Activated CD4-positive, alpha-beta memory T cell treated with anti-CD3 and anti-CD28 coated beads, Interleukin-2, amount 10 ng/mL, durations not matched to agents 7 days and 5 days (primary cell): ENCODE measurements at regions of chr2 and their contacts with region 1.

Region 1: GRCh38 chr2:101252408-101253012 is at the start of gene CNOT11:
- DNase-seq: peak; percentile 99
- H3K4me3 Mint-ChIP-seq: peak within 1 kb of the TSS; percentile 96
- H3K27ac Mint-ChIP-seq: peak within 1 kb of the TSS; percentile 93
- H3K4me1 Mint-ChIP-seq: peaks cover 52% of the 10 kb centered on the region
- H3K27me3 Mint-ChIP-seq: no peaks in the 10 kb centered on the region
- total RNA-seq, gene CNOT11: 60.3 to 65.9 TPM

Region 2: DNA sequence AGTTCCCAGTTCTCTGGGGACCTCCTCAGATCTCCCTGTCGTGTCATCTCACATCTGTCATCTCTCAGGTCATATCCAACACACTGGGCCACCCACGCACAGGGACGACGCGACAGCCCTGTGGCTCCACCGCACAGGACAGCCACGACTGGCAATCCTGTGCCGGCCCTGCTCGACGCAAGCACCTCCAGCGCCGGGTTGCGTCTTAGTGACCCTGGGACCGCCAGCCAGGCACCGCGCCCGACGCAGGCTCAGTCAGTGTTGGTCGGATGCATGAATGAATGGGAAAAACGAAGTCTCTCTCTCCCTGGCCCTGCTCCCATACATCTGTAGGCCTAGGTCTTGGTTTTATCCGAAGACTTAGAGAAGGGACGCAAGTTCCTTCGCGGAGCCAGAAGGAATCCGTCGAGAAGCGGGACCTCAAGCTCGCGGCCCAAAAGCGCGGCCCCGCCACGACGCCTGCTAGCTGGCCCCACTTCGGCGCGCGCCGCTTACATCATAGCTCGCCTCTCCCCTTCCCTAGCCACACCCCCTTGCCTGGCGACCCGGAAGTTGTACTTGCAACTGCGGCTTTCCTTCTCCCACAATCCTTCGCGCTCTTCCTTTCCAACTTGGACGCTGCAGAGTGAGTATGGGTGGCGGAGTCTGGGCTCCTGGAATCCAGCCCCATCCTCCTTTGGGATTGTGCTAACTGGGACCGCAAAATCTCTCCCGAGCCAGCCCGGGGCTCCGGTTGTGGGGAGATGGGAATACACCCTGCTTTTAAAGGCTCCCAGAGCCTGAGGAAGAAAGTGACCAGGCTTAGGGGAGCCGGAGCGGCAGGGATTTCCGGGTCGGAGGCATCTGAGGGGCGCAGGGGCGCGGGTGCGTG is 250.6 kb before region 1 on chr2 and contains the start of gene RPL31:
- CTCF ChIA-PET with region 1: no interaction called
- POLR2A ChIA-PET with region 1: interaction called, 24 read pairs
- DNase-seq: peak; percentile 97
- H3K4me3 Mint-ChIP-seq: peak within 1 kb of the TSS; percentile 100
- H3K27ac Mint-ChIP-seq: peak within 1 kb of the TSS; percentile 87
- H3K4me1 Mint-ChIP-seq: peaks cover 49% of the 10 kb centered on the region
- H3K27me3 Mint-ChIP-seq: peaks cover 3% of the 10 kb centered on the region
- total RNA-seq, gene RPL31: 1,356 to 1,364 TPM

Region 3: GRCh38 chr2:101173707-101174295 is 78.7 kb before region 1 on chr2:
- CTCF ChIA-PET with region 1: no interaction called
- POLR2A ChIA-PET with region 1: no interaction called
- DNase-seq: no peak
- H3K4me3 Mint-ChIP-seq: no peak overlapping the region
- H3K27ac Mint-ChIP-seq: no peak overlapping the region
- H3K4me1 Mint-ChIP-seq: peaks cover 5% of the 10 kb centered on the region
- H3K27me3 Mint-ChIP-seq: no peaks in the 10 kb centered on the region

Region 4: DNA sequence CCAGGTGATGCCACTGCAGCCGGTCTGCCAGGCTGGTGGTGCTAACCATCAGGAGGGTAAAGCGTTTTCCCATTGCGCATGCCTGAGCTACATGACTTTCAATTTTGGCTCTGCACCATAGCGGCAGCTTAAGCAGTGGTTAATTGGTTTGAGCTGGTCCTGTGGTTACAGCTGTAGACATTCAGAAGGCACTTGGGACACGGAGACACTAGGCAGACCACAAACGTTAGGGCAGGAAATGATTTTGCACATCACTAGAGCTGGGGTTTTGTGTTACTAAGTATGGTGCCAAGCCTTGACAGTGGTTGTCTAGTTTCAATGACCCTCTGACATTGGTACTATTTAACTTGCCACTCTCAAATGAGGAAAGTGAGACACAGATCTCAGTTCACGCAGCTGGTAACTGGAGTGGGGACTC is 28.7 kb before region 1 on chr2:
- CTCF ChIA-PET with region 1: interaction called, 5 read pairs
- POLR2A ChIA-PET with region 1: interaction called, 17 read pairs
- DNase-seq: peak; percentile 72
- H3K4me3 Mint-ChIP-seq: no peak overlapping the region
- H3K27ac Mint-ChIP-seq: peak overlapping the region; percentile 66
- H3K4me1 Mint-ChIP-seq: peaks cover 22% of the 10 kb centered on the region
- H3K27me3 Mint-ChIP-seq: no peaks in the 10 kb centered on the region

Region 5: DNA sequence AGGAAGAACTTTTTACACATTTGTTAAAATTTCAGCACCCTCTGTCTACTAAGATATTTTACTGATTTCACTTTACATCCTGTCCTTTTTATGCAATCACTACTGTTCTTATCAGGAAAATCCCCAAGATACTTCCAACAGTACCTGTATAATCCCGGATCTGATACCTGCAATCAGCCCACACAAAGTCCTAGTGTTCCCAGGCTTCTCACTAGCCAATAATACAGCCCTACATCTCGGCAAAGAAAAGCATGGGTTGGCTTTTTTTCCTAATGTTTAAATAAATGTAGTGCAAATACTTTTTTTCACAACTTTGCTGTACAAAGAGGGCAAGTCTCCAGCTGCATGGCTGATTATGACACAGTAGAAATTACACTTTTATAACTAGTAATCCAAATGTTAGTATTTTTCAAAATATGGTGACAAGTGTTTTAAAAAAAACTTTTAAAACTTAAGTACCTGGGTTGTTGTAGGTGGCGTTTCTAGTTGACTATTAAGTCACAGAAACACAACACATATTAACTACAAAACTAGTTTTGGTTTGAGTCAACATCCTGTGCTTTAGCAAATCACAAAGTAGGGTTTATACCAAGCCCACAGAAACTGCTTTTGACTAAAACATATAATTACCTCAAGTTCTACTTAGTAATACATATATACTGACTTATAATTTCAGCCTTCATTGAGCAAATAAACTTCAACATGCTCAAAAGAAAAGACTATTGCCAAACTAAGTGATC is 19.7 kb after region 1 on chr2:
- CTCF ChIA-PET with region 1: interaction called, 3 read pairs
- POLR2A ChIA-PET with region 1: interaction called, 42 read pairs
- DNase-seq: no peak
- H3K4me3 Mint-ChIP-seq: peak overlapping the region; percentile 21
- H3K27ac Mint-ChIP-seq: peak overlapping the region; percentile 85
- H3K4me1 Mint-ChIP-seq: peaks cover 57% of the 10 kb centered on the region
- H3K27me3 Mint-ChIP-seq: no peaks in the 10 kb centered on the region

Region 6: DNA sequence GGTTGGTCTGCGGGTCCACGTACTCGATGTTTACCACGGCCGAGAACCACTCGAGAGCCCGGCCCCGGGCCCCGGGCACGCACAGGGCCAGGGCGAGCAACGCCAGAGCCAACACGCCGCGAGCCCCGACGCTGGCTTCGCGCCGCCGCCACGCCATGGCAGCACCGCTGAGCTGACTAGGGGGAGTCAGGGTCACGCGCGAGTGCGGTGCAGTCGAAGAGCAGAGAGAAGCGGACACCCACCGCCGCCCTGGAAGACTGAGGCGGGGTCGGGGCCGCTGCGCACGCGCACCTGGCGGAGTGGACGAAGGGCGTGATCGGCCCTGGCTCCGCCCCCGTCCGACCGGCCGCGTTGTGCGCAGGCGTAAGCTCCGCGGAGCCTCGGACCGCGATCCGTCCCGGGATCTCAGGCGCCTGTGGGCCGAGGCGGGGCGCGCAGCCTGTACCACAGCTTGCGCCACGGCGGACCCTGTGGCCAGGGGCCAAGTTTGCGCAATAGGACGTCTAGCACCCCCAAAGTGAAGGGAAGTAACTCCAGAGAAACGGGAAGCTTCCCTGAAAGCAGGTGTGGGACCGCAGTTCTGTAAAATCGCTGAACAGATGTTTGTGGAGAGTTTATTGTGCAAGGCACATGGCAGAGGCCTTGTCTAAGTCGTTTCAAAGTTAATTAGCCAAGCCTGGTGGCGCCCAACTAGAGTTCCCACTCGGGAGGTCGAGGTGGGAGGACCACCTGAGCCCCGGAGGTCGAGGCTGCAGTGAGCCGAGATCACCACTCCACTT is 56.1 kb after region 1 on chr2 and contains the start of gene RNF149:
- CTCF ChIA-PET with region 1: interaction called, 13 read pairs
- POLR2A ChIA-PET with region 1: interaction called, 50 read pairs
- DNase-seq: peak; percentile 93
- H3K4me3 Mint-ChIP-seq: peak within 1 kb of the TSS; percentile 100
- H3K27ac Mint-ChIP-seq: peak within 1 kb of the TSS; percentile 97
- H3K4me1 Mint-ChIP-seq: peaks cover 69% of the 10 kb centered on the region
- H3K27me3 Mint-ChIP-seq: no peaks in the 10 kb centered on the region
- total RNA-seq, gene RNF149: 115 to 116 TPM

Region 7: GRCh38 chr2:101341901-101342624 is 89.6 kb after region 1 on chr2:
- CTCF ChIA-PET with region 1: interaction called, 4 read pairs
- POLR2A ChIA-PET with region 1: interaction called, 12 read pairs
- DNase-seq: peak; percentile 80
- H3K4me3 Mint-ChIP-seq: no peak overlapping the region
- H3K27ac Mint-ChIP-seq: peak overlapping the region; percentile 32
- H3K4me1 Mint-ChIP-seq: peaks cover 42% of the 10 kb centered on the region
- H3K27me3 Mint-ChIP-seq: peaks cover 7% of the 10 kb centered on the region

Region 8: DNA sequence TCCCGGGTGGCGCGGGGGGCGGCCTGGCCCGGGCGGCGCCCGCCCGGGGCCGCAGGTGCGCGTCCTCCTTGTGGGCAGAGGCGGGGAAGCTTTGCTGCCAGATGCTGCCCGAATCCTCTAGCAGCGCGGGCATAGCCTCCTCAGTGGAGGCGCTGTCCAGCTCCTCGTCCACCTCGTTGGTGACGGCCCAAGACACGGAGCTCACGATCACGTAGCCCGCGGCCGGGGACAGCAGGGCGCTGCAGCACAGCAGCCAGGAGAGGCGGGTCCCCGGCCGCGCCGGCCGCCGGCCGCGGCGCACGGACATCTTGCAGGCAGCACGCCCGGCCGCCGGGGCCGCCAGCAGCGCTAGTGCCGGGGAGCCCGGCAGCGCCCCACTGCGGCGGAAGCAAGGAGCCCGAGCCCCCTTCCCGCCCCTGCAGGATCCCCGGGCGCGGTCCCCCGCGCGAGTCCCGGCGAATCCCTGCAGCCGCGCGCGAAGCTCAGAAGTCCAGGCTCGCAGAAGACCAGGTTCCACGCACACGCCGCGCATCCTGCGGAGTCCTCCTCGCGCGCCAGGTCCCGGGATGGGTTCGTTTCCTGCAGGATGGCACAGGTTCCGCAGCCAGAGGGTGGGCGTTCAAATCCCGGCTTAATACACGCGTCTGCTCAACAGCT is 134.8 kb after region 1 on chr2 and contains the start of gene CREG2:
- CTCF ChIA-PET with region 1: interaction called, 3 read pairs
- POLR2A ChIA-PET with region 1: interaction called, 13 read pairs
- DNase-seq: peak; percentile 69
- H3K4me3 Mint-ChIP-seq: peak within 1 kb of the TSS; percentile 60
- H3K27ac Mint-ChIP-seq: no peak within 1 kb of the TSS
- H3K4me1 Mint-ChIP-seq: peaks cover 11% of the 10 kb centered on the region
- H3K27me3 Mint-ChIP-seq: peaks cover 58% of the 10 kb centered on the region
- total RNA-seq, gene CREG2: 0.65 to 0.98 TPM